Posterior vena cava (tissue), 2 donors: ENCODE measurements at regions of chr10 and their contacts with region 1.

Region 1: GRCh38 chr10:14173706-14174594 is 156.8 kb downstream of the FRMD4A start:
- DNase-seq: no peak

Region 2: GRCh38 chr10:14024329-14025202 is 149.4 kb before region 1 on chr10:
- intact Hi-C with region 1: no loop called
- DNase-seq: no peak

Region 3: GRCh38 chr10:14144451-14144850 is 29.5 kb before region 1 on chr10:
- intact Hi-C with region 1: loop called in 1 of 2 experiments (anchors 1 kb)
- DNase-seq: no peak